ENCODE measurements at regions of chr1 and their contacts with region 1.

Region 1: DNA sequence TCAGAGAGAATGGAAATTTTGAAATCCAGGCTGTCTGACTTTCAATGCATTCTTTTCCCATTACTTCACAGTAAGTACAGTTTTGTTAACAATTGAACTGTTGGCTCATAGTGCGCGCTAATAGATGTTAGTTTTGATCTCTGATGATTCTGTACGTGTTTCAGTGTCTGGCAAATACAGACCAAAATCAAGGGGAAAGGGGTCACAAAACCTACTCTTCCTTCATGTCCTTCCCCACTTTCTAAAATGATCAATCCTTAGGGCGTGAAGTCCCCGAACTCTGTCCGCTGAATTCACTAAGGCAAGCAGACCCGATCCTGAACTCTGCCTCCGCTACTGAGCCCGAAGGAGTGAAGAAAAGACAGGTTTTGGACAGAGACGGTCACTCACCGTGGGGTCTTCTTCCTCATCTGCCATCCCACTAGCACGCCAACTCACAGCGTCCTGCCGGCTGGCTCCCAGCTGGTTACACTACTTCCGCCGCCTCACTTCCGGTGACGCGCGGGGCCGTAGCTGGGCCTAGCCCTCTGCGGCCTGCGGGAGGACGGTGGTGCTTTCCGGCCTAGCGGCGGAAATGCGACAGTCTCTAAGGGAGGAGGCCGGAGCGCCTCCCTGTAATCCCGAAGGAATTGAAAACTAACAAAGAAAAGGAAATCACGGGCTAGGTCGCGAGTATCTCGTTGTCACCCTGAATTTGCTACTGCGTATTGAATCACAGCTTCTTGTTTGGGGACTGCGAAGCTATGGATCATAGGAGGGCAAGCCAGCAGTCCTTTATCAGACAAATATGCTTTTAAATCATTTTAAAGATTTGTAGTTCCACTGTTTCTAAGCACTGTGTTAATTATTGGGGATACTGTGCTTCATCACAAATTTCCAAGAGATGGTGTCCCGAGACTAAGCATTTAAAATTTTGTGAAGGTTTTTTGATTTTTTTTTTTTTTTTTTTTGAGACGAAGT is at the start of gene TAF13:
- DNase-seq: peak; percentile 97
- H3K4me3 Mint-ChIP-seq: peak within 1 kb of the TSS; percentile 93
- H3K27ac Mint-ChIP-seq: peak within 1 kb of the TSS; percentile 92
- H3K4me1 Mint-ChIP-seq: peaks cover 10% of the 10 kb centered on the region
- H3K27me3 Mint-ChIP-seq: no peaks in the 10 kb centered on the region
- total RNA-seq, gene TAF13: 24.9 and 31.7 TPM in 2 replicates

Region 2: DNA sequence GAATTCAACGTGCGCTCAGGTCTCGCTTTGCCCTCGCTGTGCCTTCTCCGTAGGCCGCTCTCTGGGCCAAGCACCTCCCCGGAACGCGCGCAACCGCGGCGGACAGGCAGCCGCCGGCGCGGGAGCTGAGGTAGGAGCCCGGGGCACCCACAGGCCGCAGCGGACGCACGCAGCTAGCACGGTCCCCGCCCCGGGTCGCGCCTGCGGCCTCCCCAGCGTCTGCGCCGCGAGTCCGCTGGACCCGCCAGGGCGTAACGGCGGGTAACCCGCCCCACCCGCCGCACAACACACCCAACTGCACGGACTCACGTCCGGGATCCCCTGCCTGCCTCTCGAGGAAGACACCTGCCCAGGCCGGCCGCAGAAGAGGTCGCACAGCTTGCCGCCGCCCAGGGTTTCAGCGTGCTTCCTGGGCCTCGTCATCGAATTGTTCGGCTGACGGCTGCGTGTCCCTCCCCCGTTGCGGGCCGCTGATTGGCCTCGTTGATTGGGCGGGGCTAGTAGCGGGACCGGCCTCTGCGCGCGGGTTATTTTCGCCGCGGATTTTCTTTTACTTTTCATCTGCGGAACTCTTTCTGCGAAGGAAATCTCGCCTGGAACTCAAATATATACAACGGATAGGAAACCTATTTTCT is 112.6 kb before region 1 on chr1 and contains the start of gene CLCC1:
- intact Hi-C with region 1: loop called (anchors 1 kb)
- DNase-seq: peak; percentile 98
- H3K4me3 Mint-ChIP-seq: peak within 1 kb of the TSS; percentile 91
- H3K27ac Mint-ChIP-seq: peak within 1 kb of the TSS; percentile 97
- H3K4me1 Mint-ChIP-seq: peaks cover 21% of the 10 kb centered on the region
- H3K27me3 Mint-ChIP-seq: peaks cover 7% of the 10 kb centered on the region
- total RNA-seq, gene CLCC1: 21.5 and 26.2 TPM in 2 replicates

Region 3: DNA sequence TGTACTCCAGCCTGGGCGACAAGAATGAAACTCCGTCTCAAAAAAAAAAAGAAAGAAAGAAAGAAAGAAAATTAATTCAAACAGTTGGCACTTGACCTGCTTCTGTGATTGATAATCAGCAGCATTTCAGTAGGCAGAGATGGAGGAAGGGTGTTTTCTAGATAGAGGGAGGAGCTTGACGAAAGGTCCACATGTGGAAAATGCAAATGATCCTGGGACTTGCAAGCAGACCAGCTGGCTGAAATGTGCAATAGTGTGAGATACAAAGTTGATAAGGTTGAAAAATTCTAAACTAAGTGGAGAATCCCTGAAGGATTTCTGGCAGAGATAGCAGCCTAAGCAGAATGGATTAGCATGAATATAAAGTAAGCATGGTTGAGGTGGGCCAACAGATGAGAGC is 42.3 kb after region 1 on chr1:
- intact Hi-C with region 1: no loop called
- DNase-seq: no peak
- H3K4me3 Mint-ChIP-seq: no peak overlapping the region
- H3K27ac Mint-ChIP-seq: no peak overlapping the region
- H3K4me1 Mint-ChIP-seq: peaks cover 26% of the 10 kb centered on the region
- H3K27me3 Mint-ChIP-seq: peaks cover 2% of the 10 kb centered on the region